ENCODE measurements at regions of chr22 and their contacts with region 1.

Region 1: DNA sequence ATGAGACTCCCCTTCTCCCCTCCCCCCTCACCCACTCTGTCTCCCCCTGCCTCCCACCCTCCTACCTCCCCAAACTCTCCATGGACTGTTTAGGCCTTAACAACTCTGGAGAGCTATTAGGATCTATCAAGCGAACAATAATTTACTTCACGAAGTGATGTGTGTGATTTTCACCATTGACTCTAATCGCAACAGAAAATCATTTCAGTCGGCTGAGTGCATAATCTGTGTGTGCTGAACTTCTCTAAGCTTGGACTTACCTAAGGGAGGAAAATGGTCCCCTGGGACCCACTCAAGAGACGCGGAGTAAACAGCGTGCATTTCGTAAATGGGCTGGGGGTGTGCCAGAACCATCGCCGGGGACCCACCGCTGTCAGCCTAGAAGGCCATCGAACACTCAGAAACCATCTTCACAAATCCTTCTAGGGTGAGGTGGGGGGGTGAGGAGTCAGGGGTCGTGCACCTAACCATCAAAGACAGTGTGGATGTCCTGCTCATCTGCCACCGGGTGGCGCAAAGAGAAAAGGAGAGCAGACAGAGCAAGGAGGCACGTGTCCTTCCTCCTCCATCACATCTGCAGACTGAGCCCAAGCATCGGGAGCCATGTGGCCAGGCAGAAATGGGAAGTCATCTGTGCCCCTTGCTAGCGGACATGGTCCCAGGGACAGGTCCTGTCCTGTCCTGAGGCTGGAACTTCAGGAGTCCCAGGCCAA is 62.1 kb upstream of the NUP50 start:
- DNase-seq: no peak
- H3K4me3 ChIP-seq: no peak overlapping the region
- H3K27ac ChIP-seq: no peak overlapping the region
- H3K4me1 ChIP-seq: no peaks in the 10 kb centered on the region
- H3K27me3 ChIP-seq: peaks cover 0 to 84% (median 4%) of the 10 kb centered on the region in 4 donors
- CTCF ChIP-seq: peak in 1 of 3 experiments; percentile 33
- EP300 ChIP-seq: no peak
- POLR2A ChIP-seq: no peak

Region 2: DNA sequence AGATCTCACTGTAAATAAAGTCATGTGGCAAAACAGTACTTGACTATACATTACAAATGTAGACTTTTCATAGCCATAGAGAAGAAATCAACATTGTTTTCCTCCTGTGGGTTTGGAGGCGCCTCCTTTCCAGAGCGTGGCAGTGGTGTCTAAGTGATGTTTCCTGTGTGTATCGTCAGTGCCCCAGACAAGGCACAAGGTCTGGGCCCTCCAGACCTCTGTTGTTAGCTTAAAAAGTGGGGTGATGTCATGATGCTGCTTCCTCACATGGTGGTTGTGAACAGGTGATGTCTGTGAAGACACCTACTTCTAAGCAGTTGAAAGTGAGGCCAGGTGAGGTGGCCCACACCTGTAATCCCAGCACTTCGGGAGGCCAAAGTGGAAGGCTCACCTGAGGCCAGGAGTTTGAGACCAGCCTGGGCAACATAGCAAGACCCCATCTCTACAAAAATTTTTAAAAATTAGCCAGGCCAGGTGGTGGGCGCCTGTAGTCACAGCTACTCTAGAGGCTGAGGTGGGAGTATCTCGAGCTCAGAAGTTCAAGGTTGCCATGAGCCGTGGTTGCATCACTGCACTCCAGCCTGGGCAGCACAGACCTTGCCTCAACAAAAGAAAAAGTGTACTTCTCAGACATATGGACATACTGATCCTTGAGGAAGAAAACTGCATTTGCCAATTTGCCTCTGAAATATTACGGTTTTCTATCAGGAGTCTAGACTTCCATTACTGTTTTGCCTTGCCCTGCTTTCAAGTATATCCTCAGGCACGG is 77.8 kb after region 1 on chr22:
- intact Hi-C with region 1: no loop called
- DNase-seq: no peak
- H3K4me3 ChIP-seq: no peak overlapping the region
- H3K27ac ChIP-seq: no peak overlapping the region
- H3K4me1 ChIP-seq: no peaks in the 10 kb centered on the region
- H3K27me3 ChIP-seq: no peaks in the 10 kb centered on the region
- CTCF ChIP-seq: no peak
- EP300 ChIP-seq: no peak
- POLR2A ChIP-seq: no peak

Region 3: GRCh38 chr22:45263463-45264269 is 162.0 kb after region 1 on chr22:
- intact Hi-C with region 1: loop called (anchors 5 kb)
- DNase-seq: no peak
- H3K4me3 ChIP-seq: no peak overlapping the region
- H3K27ac ChIP-seq: peak overlapping the region in 3 of 4 donors; percentile 32 to 66 (median 55)
- H3K4me1 ChIP-seq: peaks cover 16 to 30% (median 27%) of the 10 kb centered on the region in 4 donors
- H3K27me3 ChIP-seq: no peaks in the 10 kb centered on the region
- CTCF ChIP-seq: peak; percentile 67 to 77 (median 68)
- EP300 ChIP-seq: no peak
- POLR2A ChIP-seq: no peak